Heart left ventricle (tissue), 16 donors: ENCODE measurements at regions of chr5 and their contacts with region 1.

Region 1: GRCh38 chr5:44774279-44774880 is 34.4 kb upstream of the MRPS30 start:
- DNase-seq: no peak
- ATAC-seq: peak in 1 of 4 donors; percentile 51
- H3K4me3 ChIP-seq: no peak overlapping the region
- H3K27ac ChIP-seq: no peak overlapping the region
- H3K4me1 ChIP-seq: no peaks in the 10 kb centered on the region
- H3K27me3 ChIP-seq: no peaks in the 10 kb centered on the region
- CTCF ChIP-seq: peak; percentile 31 to 64 (median 49)
- POLR2A ChIP-seq: no peak

Region 2: DNA sequence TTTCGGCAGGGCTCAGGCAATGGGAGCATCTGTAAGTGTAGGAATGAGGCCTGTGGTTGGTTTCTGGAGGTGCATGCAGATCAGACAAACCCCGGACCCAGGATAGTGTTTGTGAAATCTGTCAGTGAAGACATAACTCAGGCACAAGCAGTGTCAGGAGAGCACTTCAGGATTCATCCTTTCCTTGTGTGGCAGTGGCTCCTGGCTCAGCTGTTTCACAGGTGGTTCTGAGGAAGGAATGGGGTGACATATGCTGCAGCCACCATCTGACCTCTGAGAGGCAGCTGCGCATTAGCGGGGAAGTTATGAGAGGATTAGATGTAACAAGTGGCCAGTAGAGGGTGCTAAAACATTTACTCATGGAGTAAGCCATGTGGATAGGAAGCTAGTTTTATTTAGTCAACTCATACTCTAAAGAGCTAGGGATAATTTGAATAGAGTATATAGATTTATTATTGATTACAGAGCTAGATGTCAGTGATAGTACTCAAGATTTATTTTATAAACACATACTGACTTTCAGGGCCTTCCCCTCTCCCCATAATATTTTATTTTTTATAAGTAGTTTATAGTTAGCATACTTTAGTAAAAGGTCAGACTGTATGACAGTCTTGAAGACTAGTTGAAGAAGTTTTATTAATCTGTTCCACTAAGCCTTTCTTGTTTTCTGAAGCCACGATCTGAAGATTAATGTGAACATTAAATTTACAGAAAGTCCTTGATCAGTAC is 1143.0 kb before region 1 on chr5:
- intact Hi-C with region 1: loop called in 1 of 10 experiments (anchors 10 kb)
- DNase-seq: peak in 3 of 5 donors; percentile 38 to 42 (median 39)
- ATAC-seq: peak; percentile 55 to 83 (median 78)
- H3K4me3 ChIP-seq: no peak overlapping the region
- H3K27ac ChIP-seq: peak overlapping the region in 7 of 12 donors; percentile 2 to 66 (median 39)
- H3K4me1 ChIP-seq: peaks cover 0 to 70% (median 26%) of the 10 kb centered on the region in 12 donors
- H3K27me3 ChIP-seq: no peaks in the 10 kb centered on the region
- CTCF ChIP-seq: peak; percentile 53 to 75 (median 66)
- POLR2A ChIP-seq: no peak

Region 3: GRCh38 chr5:43661102-43661501 is 1113.3 kb before region 1 on chr5:
- intact Hi-C with region 1: loop called in 1 of 10 experiments (anchors 10 kb)
- DNase-seq: no peak
- ATAC-seq: no peak
- H3K4me3 ChIP-seq: no peak overlapping the region
- H3K27ac ChIP-seq: no peak overlapping the region
- H3K4me1 ChIP-seq: peaks cover 0 to 12% (median 2%) of the 10 kb centered on the region in 12 donors
- H3K27me3 ChIP-seq: no peaks in the 10 kb centered on the region
- CTCF ChIP-seq: peak; percentile 36 to 58 (median 48)
- POLR2A ChIP-seq: no peak

Region 4: GRCh38 chr5:43729846-43730478 is 1044.4 kb before region 1 on chr5:
- intact Hi-C with region 1: loop called in 8 of 10 experiments (anchors 2 to 10 kb)
- DNase-seq: no peak
- ATAC-seq: no peak
- H3K4me3 ChIP-seq: no peak overlapping the region
- H3K27ac ChIP-seq: no peak overlapping the region
- H3K4me1 ChIP-seq: peaks cover 0 to 3% (median 0%) of the 10 kb centered on the region in 12 donors
- H3K27me3 ChIP-seq: no peaks in the 10 kb centered on the region
- CTCF ChIP-seq: peak; percentile 43 to 74 (median 58)
- POLR2A ChIP-seq: no peak

Region 5: DNA sequence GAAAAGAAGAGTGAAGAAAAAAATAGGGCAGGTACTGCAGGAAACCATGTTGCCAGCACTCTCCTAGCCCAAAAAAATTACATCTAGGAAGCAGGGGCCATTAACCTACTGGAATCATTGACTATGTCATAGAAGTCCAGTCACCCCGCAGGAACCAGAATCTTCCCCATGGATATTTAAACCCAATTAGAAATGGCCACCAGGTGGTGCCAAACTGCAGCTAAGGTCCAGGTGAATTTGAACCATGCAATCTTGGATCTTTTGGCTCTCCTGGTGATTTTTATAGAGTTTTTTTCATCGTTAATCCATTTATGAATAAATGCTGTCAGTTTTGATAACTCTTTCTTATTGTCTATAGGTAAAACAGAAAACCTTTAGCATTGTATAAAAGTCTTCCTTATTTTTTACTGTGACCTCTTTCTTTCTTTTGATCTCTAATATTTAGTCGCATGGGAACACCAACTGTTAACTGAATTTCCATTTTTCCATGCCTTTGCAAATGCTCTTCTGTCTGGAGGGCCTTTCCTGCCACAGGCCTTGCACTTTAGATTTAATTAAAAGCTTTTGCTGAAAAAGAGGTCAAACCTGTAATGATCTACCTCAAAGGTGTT is 237.6 kb before region 1 on chr5:
- intact Hi-C with region 1: loop called (anchors 2 to 5 kb)
- DNase-seq: no peak
- ATAC-seq: no peak
- H3K4me3 ChIP-seq: no peak overlapping the region
- H3K27ac ChIP-seq: no peak overlapping the region
- H3K4me1 ChIP-seq: peaks cover 0 to 4% (median 0%) of the 10 kb centered on the region in 12 donors
- H3K27me3 ChIP-seq: no peaks in the 10 kb centered on the region
- CTCF ChIP-seq: peak; percentile 46 to 76 (median 61)
- POLR2A ChIP-seq: no peak

Region 6: GRCh38 chr5:44808435-44809214 is 34.2 kb after region 1 on chr5 and contains the start of gene MRPS30:
- intact Hi-C with region 1: no loop called
- DNase-seq: peak; percentile 88 to 95 (median 93)
- ATAC-seq: peak; percentile 99 to 100 (median 100)
- H3K4me3 ChIP-seq: peak within 1 kb of the TSS; percentile 65 to 99 (median 92)
- H3K27ac ChIP-seq: peak within 1 kb of the TSS; percentile 51 to 95 (median 92)
- H3K4me1 ChIP-seq: peaks cover 5 to 37% (median 22%) of the 10 kb centered on the region in 12 donors
- H3K27me3 ChIP-seq: no peaks in the 10 kb centered on the region
- CTCF ChIP-seq: peak in 9 of 12 donors; percentile 14 to 61 (median 44)
- POLR2A ChIP-seq: peak in 1 of 2 donors; percentile 56
- total RNA-seq, gene MRPS30: 53.2 to 139 (median 79.8) TPM